Right cardiac atrium (tissue), 5 donors: ENCODE measurements at regions of chr4 and their contacts with region 1.

Region 1: DNA sequence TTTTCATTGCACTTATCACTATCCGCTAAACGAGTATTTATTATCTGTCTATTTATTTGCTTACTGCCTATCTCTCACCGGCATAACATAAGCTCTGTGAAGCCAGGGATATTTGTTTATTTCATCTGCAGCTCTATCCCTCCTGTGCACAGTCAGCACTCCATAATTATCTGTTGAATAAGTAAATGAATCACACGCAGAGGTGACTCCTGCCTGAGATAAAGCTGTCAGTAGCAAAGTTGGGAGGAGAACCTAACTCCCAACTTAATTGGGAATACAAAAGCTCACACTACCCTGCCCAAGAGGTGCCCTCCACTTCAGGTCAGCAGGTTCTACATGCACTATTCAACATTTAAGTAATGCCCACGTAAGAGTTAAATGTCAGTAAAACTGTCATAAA is 85.7 kb downstream of the CORIN start:
- DNase-seq: no peak
- ATAC-seq: peak; percentile 69 to 71
- H3K4me3 ChIP-seq: no peak overlapping the region
- H3K27ac ChIP-seq: peak overlapping the region; percentile 70
- H3K4me1 ChIP-seq: no peaks in the 10 kb centered on the region
- H3K27me3 ChIP-seq: no peaks in the 10 kb centered on the region

Region 2: GRCh38 chr4:47704693-47705325 is 47.4 kb before region 1 on chr4:
- intact Hi-C with region 1: loop called in 2 of 4 experiments (anchors 10 kb)
- DNase-seq: peak; percentile 25 to 64 (median 38)
- ATAC-seq: peak; percentile 87 to 91
- H3K4me3 ChIP-seq: peak overlapping the region; percentile 55
- H3K27ac ChIP-seq: no peak overlapping the region
- H3K4me1 ChIP-seq: no peaks in the 10 kb centered on the region
- H3K27me3 ChIP-seq: no peaks in the 10 kb centered on the region

Region 3: DNA sequence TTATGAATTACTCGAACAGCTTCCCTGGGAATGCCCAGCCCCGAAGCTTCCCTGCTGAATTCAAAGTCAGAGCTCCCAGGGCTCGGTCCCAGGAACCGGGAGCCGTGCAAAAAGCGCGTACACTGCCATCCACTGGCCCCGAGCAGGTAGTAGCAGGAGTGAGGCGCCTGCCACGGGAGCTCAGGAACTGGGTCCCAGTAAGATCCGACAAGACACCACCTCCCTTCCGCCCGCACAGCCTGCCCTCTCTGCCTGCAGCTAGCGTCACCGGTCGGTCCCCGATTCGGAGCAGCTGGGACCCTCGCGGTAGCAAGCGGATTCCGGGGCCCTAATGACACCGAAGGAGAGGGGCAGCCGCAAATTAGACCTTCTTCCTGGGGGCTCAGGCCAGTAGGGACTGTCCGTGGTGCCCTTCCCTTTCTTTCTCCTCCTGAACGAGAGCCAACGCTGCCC is 84.5 kb after region 1 on chr4:
- intact Hi-C with region 1: loop called in 1 of 4 experiments (anchors 10 kb)
- DNase-seq: peak; percentile 81 to 92 (median 91)
- ATAC-seq: peak; percentile 94 to 96
- H3K4me3 ChIP-seq: peak overlapping the region; percentile 50
- H3K27ac ChIP-seq: peak overlapping the region; percentile 48
- H3K4me1 ChIP-seq: no peaks in the 10 kb centered on the region
- H3K27me3 ChIP-seq: no peaks in the 10 kb centered on the region